ENCODE measurements at regions of chr1 and their contacts with region 1.

Region 1: GRCh38 chr1:148334339-148335130 is 148.6 kb downstream of the PPIAL4G start:
- DNase-seq: peak; percentile 87
- H3K4me3 Mint-ChIP-seq: peak overlapping the region; percentile 86
- H3K27ac Mint-ChIP-seq: peak overlapping the region; percentile 100
- H3K4me1 Mint-ChIP-seq: peaks cover 41% of the 10 kb centered on the region
- H3K27me3 Mint-ChIP-seq: peaks cover 32% of the 10 kb centered on the region

Region 2: GRCh38 chr1:148010527-148010926 is 324.0 kb before region 1 on chr1:
- CTCF ChIA-PET with region 1: no interaction called
- POLR2A ChIA-PET with region 1: no interaction called
- DNase-seq: no peak
- H3K4me3 Mint-ChIP-seq: no peak overlapping the region
- H3K27ac Mint-ChIP-seq: no peak overlapping the region
- H3K4me1 Mint-ChIP-seq: peaks cover 10% of the 10 kb centered on the region
- H3K27me3 Mint-ChIP-seq: peaks cover 23% of the 10 kb centered on the region

Region 3: DNA sequence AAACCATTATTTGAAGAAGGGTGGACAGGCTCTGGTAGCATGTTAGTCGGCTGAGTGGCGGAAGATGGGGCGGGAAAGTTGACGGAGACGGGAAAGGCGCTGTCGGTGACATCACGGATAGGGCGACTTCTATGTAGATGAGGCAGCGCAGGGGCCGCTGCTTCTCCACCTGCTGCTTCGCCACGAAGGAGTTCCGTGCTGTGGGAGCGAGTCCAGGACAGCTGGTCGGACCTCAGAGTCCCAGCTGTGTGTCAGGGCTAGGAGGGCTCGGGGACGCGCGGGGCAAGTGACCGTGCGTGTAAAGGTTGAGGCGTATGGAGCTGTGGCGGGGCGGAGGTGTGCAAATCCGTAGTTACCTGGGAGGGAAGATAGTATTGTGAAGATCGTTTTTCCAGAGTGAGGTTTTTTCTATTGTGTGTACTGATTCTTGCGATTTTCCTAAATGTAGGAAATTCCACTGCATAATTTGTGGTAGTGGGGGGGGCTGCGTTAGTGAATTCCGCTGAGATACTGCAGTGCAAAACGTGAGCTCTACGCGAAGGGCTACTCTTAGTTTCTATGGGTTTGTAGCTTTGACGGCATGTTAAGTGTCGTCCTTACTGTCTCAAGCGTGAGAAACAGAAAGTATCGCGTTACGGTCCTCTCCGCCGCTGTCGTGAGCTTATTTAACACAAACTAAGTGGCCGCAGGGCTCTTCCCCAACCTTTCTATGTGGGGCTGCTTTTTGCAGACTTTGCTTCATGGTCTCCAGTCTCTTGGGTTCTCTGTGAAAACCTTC is 71.2 kb before region 1 on chr1:
- CTCF ChIA-PET with region 1: interaction called, 3 read pairs
- POLR2A ChIA-PET with region 1: interaction called, 71 read pairs
- DNase-seq: peak; percentile 68
- H3K4me3 Mint-ChIP-seq: peak overlapping the region; percentile 84
- H3K27ac Mint-ChIP-seq: peak overlapping the region; percentile 89
- H3K4me1 Mint-ChIP-seq: peaks cover 20% of the 10 kb centered on the region
- H3K27me3 Mint-ChIP-seq: peaks cover 26% of the 10 kb centered on the region

Region 4: GRCh38 chr1:148290881-148291280 is 43.7 kb before region 1 on chr1:
- CTCF ChIA-PET with region 1: no interaction called
- POLR2A ChIA-PET with region 1: no interaction called
- DNase-seq: no peak
- H3K4me3 Mint-ChIP-seq: no peak overlapping the region
- H3K27ac Mint-ChIP-seq: no peak overlapping the region
- H3K4me1 Mint-ChIP-seq: no peaks in the 10 kb centered on the region
- H3K27me3 Mint-ChIP-seq: peaks cover 15% of the 10 kb centered on the region

Region 5: DNA sequence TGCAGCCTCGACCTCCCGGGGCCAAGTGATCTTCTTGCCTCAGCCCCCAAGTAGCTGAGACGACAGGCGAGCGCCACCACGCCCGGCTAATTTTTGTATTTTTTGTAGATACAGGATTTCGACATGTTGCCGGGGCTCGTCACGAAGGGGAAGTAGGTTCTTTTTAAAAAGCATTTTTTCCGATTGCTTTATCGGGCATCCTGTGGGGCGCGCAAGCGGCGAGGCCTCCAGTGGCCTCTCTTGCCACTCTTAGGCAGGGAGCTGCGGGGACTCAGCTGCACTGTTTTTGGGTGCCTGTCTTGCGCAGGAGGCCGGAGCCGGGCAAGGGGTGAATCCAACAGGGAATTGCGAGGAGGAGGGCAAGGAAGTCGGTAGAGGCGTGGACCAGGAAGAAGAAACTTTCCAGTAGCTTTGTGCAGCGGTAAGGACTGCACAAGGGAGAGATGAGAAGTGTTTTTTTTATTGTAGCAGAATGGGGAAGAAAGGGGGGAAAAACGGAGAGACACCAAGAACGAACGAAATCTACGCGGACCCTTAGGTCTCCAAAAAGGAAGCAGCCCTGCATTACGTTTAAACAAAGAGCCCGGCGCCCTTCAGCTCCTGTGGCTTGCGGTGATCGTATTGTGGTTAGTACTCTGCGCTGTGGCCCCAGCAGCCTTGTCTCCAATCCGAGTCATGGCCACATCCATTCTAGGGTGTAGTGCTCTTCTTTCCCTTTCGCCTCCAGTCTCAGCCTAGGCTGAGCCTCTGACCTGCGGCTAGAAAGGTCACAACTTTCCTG is 16.2 kb before region 1 on chr1:
- CTCF ChIA-PET with region 1: interaction called, 3 read pairs
- POLR2A ChIA-PET with region 1: interaction called, 10 read pairs
- DNase-seq: peak; percentile 84
- H3K4me3 Mint-ChIP-seq: peak overlapping the region; percentile 82
- H3K27ac Mint-ChIP-seq: peak overlapping the region; percentile 88
- H3K4me1 Mint-ChIP-seq: peaks cover 39% of the 10 kb centered on the region
- H3K27me3 Mint-ChIP-seq: peaks cover 49% of the 10 kb centered on the region

Measured in activated CD4-positive, alpha-beta T cell treated with anti-CD3 and anti-CD28 coated beads, Interleukin-2, amount 10 ng/mL, durations not matched to agents 7 days and 5 days (primary cell).